ENCODE measurements at regions of chr3 and their contacts with region 1.

Region 1: DNA sequence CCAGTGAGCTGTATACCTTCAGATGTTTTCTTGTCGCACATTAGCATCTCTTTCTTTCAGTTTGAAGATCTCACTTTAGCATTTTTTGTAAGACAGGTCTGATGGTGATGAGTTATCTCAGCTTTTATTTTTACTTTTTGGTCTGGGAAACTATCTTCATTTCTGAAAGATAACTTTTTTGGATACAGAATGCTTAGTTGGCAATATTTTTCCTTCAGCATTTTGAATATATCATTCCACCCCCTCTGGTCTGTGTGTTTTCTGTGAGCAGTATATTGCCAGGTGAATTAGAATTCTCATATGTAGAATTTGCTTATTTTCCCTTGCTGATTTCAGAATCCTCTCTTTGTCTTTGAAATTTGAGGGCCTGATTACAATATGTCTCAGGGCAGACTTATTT is 743.3 kb downstream of the PLOD2 start:
- DNase-seq: no peak
- ATAC-seq: no peak
- H3K4me3 ChIP-seq: no peak overlapping the region
- H3K27ac ChIP-seq: no peak overlapping the region
- H3K4me1 ChIP-seq: no peaks in the 10 kb centered on the region
- H3K27me3 ChIP-seq: no peaks in the 10 kb centered on the region
- CTCF ChIP-seq: no peak
- POLR2A ChIP-seq: no peak

Region 2: GRCh38 chr3:145370544-145371252 is 47.0 kb before region 1 on chr3:
- in situ Hi-C with region 1: no loop called
- intact Hi-C with region 1: loop called (anchors 2 kb)
- DNase-seq: no peak
- ATAC-seq: no peak
- H3K4me3 ChIP-seq: no peak overlapping the region
- H3K27ac ChIP-seq: no peak overlapping the region
- H3K4me1 ChIP-seq: no peaks in the 10 kb centered on the region
- H3K27me3 ChIP-seq: no peaks in the 10 kb centered on the region
- CTCF ChIP-seq: no peak
- POLR2A ChIP-seq: no peak

Region 3: DNA sequence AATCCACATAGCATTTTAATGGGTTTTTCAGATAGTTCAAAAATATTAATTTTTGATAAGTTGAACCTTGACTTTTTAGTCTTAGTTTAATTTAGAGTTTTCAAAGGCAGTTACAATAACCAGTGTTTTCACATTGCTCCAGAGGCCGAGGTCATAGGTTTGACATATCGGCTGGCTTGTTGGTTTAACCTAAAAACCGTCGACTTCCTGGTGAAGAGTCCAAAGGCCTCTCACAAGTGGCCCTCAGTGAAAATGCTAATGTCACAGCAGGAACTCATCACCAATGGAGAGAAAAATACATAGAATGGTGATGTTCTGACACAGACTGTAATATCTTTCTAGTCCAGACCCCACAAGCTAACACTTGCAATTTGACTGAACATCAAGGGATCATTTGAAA is 101.0 kb after region 1 on chr3:
- in situ Hi-C with region 1: no loop called
- intact Hi-C with region 1: no loop called
- DNase-seq: no peak
- ATAC-seq: no peak
- H3K4me3 ChIP-seq: no peak overlapping the region
- H3K27ac ChIP-seq: no peak overlapping the region
- H3K4me1 ChIP-seq: no peaks in the 10 kb centered on the region
- H3K27me3 ChIP-seq: no peaks in the 10 kb centered on the region
- CTCF ChIP-seq: no peak
- POLR2A ChIP-seq: no peak